PC-9 (cell line): ENCODE measurements at regions of chr5 and their contacts with region 1.

Region 1: GRCh38 chr5:140113699-140114263 is at the start of gene PURA:
- DNase-seq: peak; percentile 80 to 94
- H3K4me3 ChIP-seq: peak within 1 kb of the TSS; percentile 74
- H3K27ac ChIP-seq: peak within 1 kb of the TSS; percentile 56
- H3K4me1 ChIP-seq: peaks cover 51% of the 10 kb centered on the region
- H3K27me3 ChIP-seq: no peaks in the 10 kb centered on the region
- CTCF ChIP-seq: no peak
- total RNA-seq, gene PURA: 13.6 and 17.9 TPM in 2 replicates

Region 2: DNA sequence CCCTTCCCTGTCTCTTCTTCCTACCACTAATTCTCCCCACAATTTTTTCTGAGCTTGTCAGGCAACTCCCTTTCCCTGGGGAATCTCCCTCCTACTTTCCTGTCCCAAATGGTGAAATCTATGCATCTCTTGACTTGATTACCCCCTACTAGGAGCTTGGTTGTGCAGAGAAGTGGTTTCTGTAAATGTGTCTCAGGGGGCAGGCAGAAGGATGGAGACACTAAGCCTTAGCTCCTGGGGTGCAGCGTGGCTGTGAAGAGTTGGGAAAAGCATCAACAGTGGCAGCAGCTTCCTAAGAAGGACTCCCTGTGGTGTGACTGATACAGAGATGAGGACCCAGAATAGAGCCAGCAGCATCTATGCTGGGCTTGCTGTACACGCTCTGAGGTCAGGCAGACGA is 133.0 kb before region 1 on chr5:
- CTCF ChIA-PET with region 1: no interaction called
- POLR2A ChIA-PET with region 1: no interaction called
- intact Hi-C with region 1: no loop called
- DNase-seq: no peak
- H3K4me3 ChIP-seq: no peak overlapping the region
- H3K27ac ChIP-seq: no peak overlapping the region
- H3K4me1 ChIP-seq: peaks cover 15% of the 10 kb centered on the region
- H3K27me3 ChIP-seq: 0 out of 2 replicates have a peak, but pooled peaks cover 6% of the 10 kb centered on the region
- CTCF ChIP-seq: no peak

Region 3: DNA sequence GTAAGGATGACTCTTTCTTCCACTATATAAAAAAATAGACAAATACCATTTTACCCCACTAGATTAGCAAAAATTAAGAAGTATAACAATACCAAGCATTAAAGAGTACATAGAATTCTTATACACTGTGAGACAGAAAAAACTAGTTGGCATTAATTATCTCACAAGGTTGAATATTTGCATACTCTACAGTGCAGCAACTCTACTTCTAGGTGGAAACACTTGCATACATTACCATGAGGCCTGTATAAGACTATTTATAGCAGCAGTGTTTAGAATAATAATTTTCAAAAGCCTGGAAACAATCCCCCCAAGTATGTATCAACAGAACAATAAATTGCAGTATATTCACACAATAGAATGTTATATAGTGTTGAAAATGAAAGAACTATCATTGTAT is 18.9 kb before region 1 on chr5:
- CTCF ChIA-PET with region 1: interaction called, 13 read pairs
- POLR2A ChIA-PET with region 1: no interaction called
- intact Hi-C with region 1: no loop called
- DNase-seq: no peak
- H3K4me3 ChIP-seq: no peak overlapping the region
- H3K27ac ChIP-seq: no peak overlapping the region
- H3K4me1 ChIP-seq: no peaks in the 10 kb centered on the region
- H3K27me3 ChIP-seq: peaks cover 8% of the 10 kb centered on the region; the same call in 1 of the 2 replicates
- CTCF ChIP-seq: no peak

Region 4: GRCh38 chr5:140145818-140146522 is 32.2 kb after region 1 on chr5:
- CTCF ChIA-PET with region 1: interaction called, 4 read pairs
- POLR2A ChIA-PET with region 1: no interaction called
- intact Hi-C with region 1: loop called (anchors 2 kb)
- DNase-seq: peak in 1 of 2 experiments; percentile 65
- H3K4me3 ChIP-seq: no peak overlapping the region
- H3K27ac ChIP-seq: no peak overlapping the region
- H3K4me1 ChIP-seq: no peaks in the 10 kb centered on the region
- H3K27me3 ChIP-seq: no peaks in the 10 kb centered on the region
- CTCF ChIP-seq: no peak